Head of caudate nucleus (tissue), 42 donors: ENCODE measurements at regions of chr12 and their contacts with region 1.

Region 1: GRCh38 chr12:34121360-34121759 is 99.1 kb downstream of the ALG10 start:
- DNase-seq: no peak

Region 2: DNA sequence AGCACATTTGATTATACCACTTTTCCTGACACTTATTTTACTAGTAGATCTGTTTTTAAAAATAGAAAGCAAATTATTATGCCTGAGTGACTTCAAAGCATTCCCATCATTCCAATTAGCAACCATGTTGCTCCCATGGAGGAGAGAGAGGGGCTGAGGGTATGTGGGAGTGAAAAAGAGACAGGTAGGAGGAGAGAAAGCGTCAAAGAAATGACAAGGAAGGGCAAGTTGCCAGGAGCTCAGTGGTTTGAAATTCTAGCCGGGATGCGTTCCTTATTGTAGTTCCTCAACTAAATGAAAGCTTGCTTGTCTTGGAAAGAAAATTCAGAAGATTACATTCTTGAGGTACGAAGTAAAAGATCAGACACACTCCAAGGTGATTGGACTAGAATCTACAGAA is 1132.4 kb before region 1 on chr12:
- intact Hi-C with region 1: no loop called
- DNase-seq: peak in 32 of 42 donors; percentile 9 to 82 (median 43)

Region 3: GRCh38 chr12:34218165-34219045 is 97.0 kb after region 1 on chr12:
- intact Hi-C with region 1: loop called (anchors 5 kb)
- DNase-seq: peak; percentile 21 to 88 (median 72)

Region 4: DNA sequence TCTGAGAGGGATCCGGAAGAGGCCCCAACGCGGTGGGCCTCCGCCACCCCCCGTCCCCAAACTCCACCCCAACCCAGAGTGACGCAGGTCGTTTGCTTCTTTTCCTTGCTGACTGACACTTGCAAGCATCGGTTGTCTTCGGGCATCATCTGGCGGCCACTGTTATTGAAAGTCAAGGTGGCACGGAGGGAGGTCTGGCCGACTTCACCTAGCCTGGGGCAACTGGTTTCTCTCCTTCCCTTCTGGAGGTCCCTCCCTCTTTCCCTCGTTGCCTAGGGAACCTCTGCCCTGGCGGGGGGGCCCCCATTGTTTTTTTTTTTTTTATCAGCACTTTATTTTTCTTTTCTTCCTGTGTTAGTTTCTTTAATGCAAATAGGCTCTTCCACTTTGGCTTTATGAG is 142.8 kb after region 1 on chr12:
- intact Hi-C with region 1: no loop called
- DNase-seq: peak in 1 of 42 donors; percentile 13